B cell (primary cell): ENCODE measurements at regions of chr2 and their contacts with region 1.

Region 1: DNA sequence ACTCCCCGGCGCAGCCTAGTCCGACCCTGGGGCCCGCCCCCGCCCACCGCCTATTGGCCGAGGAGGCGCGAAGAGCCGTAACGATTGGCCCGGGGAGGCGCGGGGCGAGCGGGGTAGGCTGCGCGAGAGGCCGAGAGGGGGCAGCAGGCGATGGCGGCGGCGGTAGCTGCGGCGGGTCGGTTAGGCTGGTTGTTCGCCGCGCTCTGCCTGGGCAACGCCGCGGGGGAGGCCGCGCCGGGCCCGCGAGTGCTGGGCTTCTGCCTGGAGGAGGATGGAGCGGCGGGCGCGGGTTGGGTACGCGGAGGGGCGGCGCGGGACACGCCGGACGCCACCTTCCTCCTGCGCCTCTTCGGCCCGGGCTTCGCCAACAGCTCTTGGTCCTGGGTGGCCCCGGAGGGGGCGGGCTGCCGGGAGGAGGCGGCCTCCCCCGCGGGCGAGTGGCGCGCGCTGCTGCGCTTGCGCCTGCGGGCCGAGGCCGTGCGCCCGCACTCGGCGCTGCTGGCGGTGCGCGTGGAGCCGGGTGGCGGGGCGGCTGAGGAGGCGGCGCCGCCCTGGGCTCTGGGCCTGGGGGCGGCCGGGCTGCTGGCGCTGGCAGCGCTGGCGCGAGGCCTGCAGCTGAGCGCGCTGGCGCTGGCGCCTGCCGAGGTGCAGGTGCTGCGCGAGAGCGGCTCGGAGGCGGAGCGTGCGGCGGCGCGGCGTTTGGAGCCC is at the start of gene CNNM3:
- DNase-seq: peak; percentile 96
- ATAC-seq: peak; percentile 91
- H3K4me3 ChIP-seq: peak within 1 kb of the TSS; percentile 59 to 95 (median 81)
- H3K4me3 Mint-ChIP-seq: peak within 1 kb of the TSS; percentile 93
- H3K27ac ChIP-seq: peak within 1 kb of the TSS; percentile 19 to 76
- H3K27ac Mint-ChIP-seq: peak within 1 kb of the TSS; percentile 93
- H3K4me1 ChIP-seq: peaks cover 34 to 37% of the 10 kb centered on the region in 2 donors
- H3K4me1 Mint-ChIP-seq: peaks cover 57% of the 10 kb centered on the region
- H3K27me3 ChIP-seq: no peaks in the 10 kb centered on the region
- H3K27me3 Mint-ChIP-seq: no peaks in the 10 kb centered on the region
- CTCF ChIP-seq: peak; percentile 73
- total RNA-seq, gene CNNM3: 52.1 and 54.7 TPM in 2 replicates

Region 2: DNA sequence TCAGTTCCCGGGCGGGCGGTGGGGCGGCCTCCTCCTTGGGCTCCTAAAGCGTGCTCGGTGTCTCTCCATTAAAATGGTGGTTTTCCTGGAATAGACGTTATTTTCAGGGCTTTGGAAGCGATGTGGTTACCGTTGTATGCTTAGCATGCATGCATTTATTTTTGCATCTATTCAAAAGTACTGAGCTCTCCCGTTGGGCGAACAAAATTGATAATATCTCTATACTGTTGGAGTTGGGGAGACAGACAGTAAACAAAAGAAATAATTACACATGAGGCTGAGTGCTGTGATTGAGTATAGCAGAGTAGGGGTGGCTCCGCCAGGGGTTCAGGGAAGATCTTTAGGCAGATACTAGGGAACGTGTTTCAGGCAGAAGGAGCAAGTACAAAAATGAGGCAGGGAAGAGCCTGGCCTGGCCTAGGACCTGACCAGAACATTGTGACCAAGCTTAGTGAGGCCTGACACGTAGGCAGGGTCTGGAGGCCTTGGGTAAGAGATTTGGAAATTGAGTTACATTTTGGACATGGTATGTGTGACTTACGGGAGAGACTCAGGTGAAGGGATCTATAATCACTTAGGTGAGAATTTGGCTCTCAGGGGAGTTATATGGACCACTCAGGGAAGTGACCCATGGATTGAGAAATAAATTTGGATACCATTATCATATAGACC is 480.0 kb before region 1 on chr2:
- CTCF ChIA-PET with region 1: no interaction called
- POLR2A ChIA-PET with region 1: no interaction called
- intact Hi-C with region 1: loop called (anchors 5 kb)
- DNase-seq: no peak
- ATAC-seq: no peak
- H3K4me3 ChIP-seq: peak overlapping the region; percentile 15 to 78 (median 61)
- H3K4me3 Mint-ChIP-seq: peak overlapping the region; percentile 71
- H3K27ac ChIP-seq: peak overlapping the region in 1 of 2 donors; percentile 92
- H3K27ac Mint-ChIP-seq: peak overlapping the region; percentile 69
- H3K4me1 ChIP-seq: peaks cover 14 to 22% of the 10 kb centered on the region in 2 donors
- H3K4me1 Mint-ChIP-seq: peaks cover 33% of the 10 kb centered on the region
- H3K27me3 ChIP-seq: no peaks in the 10 kb centered on the region
- H3K27me3 Mint-ChIP-seq: no peaks in the 10 kb centered on the region
- CTCF ChIP-seq: no peak

Region 3: DNA sequence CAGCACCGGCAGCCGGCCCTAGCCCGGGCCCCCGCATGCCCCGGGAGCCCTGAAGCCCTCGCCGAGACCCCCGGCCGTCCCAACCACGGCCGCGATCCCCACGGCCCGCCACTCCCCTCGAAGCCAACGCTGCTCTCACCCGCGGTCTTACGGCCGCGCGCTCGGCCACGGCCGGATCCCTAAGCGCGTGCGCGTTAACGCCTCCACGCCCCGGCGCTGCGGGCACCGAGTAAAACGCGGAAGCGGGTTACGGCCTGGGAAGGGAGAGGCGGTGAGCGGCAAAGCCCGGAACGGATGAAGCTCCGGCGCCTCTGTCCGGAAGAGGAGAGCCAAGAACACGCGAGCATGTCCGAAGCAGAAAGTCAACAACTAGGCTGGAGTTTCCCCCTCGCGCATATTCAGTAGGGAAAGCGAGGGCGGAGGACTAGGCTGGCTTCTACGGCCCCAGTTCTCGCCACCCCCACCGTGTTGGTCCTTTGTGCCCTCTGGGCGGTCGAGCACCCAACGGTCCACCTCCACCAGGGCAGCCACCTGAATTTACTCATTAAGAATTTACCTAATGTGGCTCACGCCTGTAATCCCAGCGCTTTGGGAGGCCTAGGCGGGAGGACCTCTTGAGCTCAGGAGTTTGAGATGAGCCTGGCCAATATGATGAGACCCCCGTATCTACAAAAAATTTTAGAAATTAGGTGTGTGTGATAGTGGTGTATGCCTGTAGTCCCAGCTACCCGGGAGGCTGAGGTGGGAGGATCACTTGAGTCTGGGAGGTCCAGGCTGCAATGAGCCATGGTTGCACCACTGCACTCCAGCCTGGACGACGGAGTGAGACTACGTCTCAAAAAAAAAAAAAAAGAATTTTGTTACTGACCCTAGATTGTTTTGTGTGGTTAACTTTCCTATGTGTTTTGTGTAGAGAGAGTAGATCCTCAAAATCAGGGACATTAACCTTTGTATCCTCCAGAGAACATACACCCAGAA is 177.8 kb before region 1 on chr2 and contains the start of gene KANSL3:
- CTCF ChIA-PET with region 1: no interaction called
- POLR2A ChIA-PET with region 1: interaction called, 4 read pairs
- intact Hi-C with region 1: loop called (anchors 1 kb)
- DNase-seq: peak; percentile 96
- ATAC-seq: peak; percentile 89
- H3K4me3 ChIP-seq: peak within 1 kb of the TSS; percentile 81 to 96 (median 88)
- H3K4me3 Mint-ChIP-seq: peak within 1 kb of the TSS; percentile 98
- H3K27ac ChIP-seq: peak within 1 kb of the TSS; percentile 57 to 88
- H3K27ac Mint-ChIP-seq: peak within 1 kb of the TSS; percentile 96
- H3K4me1 ChIP-seq: peaks cover 20 to 24% of the 10 kb centered on the region in 2 donors
- H3K4me1 Mint-ChIP-seq: peaks cover 42% of the 10 kb centered on the region
- H3K27me3 ChIP-seq: no peaks in the 10 kb centered on the region
- H3K27me3 Mint-ChIP-seq: peaks cover 4% of the 10 kb centered on the region
- CTCF ChIP-seq: no peak
- total RNA-seq, gene KANSL3: 55.4 and 56.9 TPM in 2 replicates

Region 4: GRCh38 chr2:96739633-96740428 is 76.5 kb before region 1 on chr2 and contains the start of gene LMAN2L:
- CTCF ChIA-PET with region 1: no interaction called
- POLR2A ChIA-PET with region 1: no interaction called
- intact Hi-C with region 1: loop called (anchors 2 kb)
- DNase-seq: peak; percentile 97
- ATAC-seq: peak; percentile 98
- H3K4me3 ChIP-seq: peak within 1 kb of the TSS; percentile 67 to 93 (median 88)
- H3K4me3 Mint-ChIP-seq: peak within 1 kb of the TSS; percentile 97
- H3K27ac ChIP-seq: peak within 1 kb of the TSS; percentile 80 to 85
- H3K27ac Mint-ChIP-seq: peak within 1 kb of the TSS; percentile 97
- H3K4me1 ChIP-seq: peaks cover 14 to 25% of the 10 kb centered on the region in 2 donors
- H3K4me1 Mint-ChIP-seq: peaks cover 29% of the 10 kb centered on the region
- H3K27me3 ChIP-seq: no peaks in the 10 kb centered on the region
- H3K27me3 Mint-ChIP-seq: no peaks in the 10 kb centered on the region
- CTCF ChIP-seq: no peak
- total RNA-seq, gene LMAN2L: 10.7 TPM in 2 replicates

Region 5: GRCh38 chr2:96801005-96801785 is 15.1 kb before region 1 on chr2:
- CTCF ChIA-PET with region 1: interaction called, 16 read pairs
- POLR2A ChIA-PET with region 1: interaction called, 9 read pairs
- intact Hi-C with region 1: loop called (anchors 1 kb)
- DNase-seq: peak; percentile 80
- ATAC-seq: peak; percentile 98
- H3K4me3 ChIP-seq: no peak overlapping the region
- H3K4me3 Mint-ChIP-seq: no peak overlapping the region
- H3K27ac ChIP-seq: no peak overlapping the region
- H3K27ac Mint-ChIP-seq: no peak overlapping the region
- H3K4me1 ChIP-seq: peaks cover 25 to 30% of the 10 kb centered on the region in 2 donors
- H3K4me1 Mint-ChIP-seq: peaks cover 4% of the 10 kb centered on the region
- H3K27me3 ChIP-seq: no peaks in the 10 kb centered on the region
- H3K27me3 Mint-ChIP-seq: no peaks in the 10 kb centered on the region
- CTCF ChIP-seq: peak; percentile 94

Region 6: GRCh38 chr2:96907115-96908041 is 91.1 kb after region 1 on chr2:
- CTCF ChIA-PET with region 1: no interaction called
- POLR2A ChIA-PET with region 1: no interaction called
- intact Hi-C with region 1: no loop called
- DNase-seq: no peak
- ATAC-seq: no peak
- H3K4me3 ChIP-seq: no peak overlapping the region
- H3K4me3 Mint-ChIP-seq: no peak overlapping the region
- H3K27ac ChIP-seq: no peak overlapping the region
- H3K27ac Mint-ChIP-seq: no peak overlapping the region
- H3K4me1 ChIP-seq: no peaks in the 10 kb centered on the region
- H3K4me1 Mint-ChIP-seq: peaks cover 5% of the 10 kb centered on the region
- H3K27me3 ChIP-seq: no peaks in the 10 kb centered on the region
- H3K27me3 Mint-ChIP-seq: no peaks in the 10 kb centered on the region
- CTCF ChIP-seq: no peak

Region 7: DNA sequence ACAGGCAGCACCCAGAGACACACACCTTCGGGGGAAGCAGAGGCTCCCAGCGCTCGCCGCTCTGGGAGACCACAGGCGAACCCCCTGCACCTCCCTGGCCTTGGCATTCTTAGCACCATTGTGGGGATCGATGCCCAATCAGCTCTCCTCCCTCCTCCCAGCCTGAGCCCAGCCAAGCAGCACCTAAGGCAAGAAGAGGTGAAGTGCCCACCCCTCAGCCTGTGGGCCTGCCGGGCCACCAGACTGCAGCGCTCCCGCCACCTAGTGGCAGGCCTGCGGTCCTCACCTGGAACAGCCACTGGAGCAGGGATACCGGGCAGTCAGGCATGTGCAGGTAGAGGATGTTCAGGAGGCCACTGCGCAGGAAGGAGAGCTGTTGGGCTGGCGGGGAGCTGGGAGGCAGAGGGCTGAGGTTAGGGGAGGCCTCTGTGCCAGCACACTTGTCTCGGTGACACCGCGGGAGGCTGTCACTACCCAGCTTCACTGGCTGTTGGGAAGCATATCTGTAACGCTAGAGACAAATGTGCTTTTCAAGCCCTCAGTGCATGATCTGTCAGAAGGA is 134.9 kb after region 1 on chr2:
- CTCF ChIA-PET with region 1: interaction called, 4 read pairs
- POLR2A ChIA-PET with region 1: no interaction called
- intact Hi-C with region 1: loop called (anchors 1 kb)
- DNase-seq: peak; percentile 77
- ATAC-seq: peak; percentile 86
- H3K4me3 ChIP-seq: no peak overlapping the region
- H3K4me3 Mint-ChIP-seq: no peak overlapping the region
- H3K27ac ChIP-seq: no peak overlapping the region
- H3K27ac Mint-ChIP-seq: no peak overlapping the region
- H3K4me1 ChIP-seq: peaks cover 11 to 13% of the 10 kb centered on the region in 2 donors
- H3K4me1 Mint-ChIP-seq: peaks cover 14% of the 10 kb centered on the region
- H3K27me3 ChIP-seq: peaks cover 0 to 22% (median 0%) of the 10 kb centered on the region in 4 experiments
- H3K27me3 Mint-ChIP-seq: peaks cover 16% of the 10 kb centered on the region
- CTCF ChIP-seq: peak; percentile 82